ENCODE measurements at regions of chr15 and their contacts with region 1.

Region 1: GRCh38 chr15:56491110-56491722 is 26.3 kb upstream of the MNS1 start:
- DNase-seq: peak; percentile 82

Region 2: DNA sequence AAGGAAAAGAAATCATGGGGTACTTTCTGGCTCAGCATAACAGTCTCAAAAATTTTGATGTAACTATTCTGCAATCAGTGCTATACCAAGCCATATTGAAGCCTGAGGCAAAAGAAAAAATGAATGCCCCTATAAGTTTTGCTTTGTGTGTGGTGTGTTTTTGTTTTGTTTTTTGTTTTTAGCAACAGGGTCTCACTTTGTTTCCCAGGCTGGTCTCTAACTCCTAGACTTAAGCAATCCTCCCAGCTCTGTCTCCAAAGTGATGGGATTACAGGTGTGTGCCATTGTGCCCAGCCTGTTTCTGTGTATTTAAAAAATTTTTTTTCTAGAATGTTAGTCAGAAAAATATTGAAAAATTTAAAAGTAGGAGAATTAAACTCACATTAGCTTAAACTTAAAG is 148.9 kb after region 1 on chr15:
- in situ Hi-C with region 1: no loop called
- DNase-seq: no peak

Region 3: DNA sequence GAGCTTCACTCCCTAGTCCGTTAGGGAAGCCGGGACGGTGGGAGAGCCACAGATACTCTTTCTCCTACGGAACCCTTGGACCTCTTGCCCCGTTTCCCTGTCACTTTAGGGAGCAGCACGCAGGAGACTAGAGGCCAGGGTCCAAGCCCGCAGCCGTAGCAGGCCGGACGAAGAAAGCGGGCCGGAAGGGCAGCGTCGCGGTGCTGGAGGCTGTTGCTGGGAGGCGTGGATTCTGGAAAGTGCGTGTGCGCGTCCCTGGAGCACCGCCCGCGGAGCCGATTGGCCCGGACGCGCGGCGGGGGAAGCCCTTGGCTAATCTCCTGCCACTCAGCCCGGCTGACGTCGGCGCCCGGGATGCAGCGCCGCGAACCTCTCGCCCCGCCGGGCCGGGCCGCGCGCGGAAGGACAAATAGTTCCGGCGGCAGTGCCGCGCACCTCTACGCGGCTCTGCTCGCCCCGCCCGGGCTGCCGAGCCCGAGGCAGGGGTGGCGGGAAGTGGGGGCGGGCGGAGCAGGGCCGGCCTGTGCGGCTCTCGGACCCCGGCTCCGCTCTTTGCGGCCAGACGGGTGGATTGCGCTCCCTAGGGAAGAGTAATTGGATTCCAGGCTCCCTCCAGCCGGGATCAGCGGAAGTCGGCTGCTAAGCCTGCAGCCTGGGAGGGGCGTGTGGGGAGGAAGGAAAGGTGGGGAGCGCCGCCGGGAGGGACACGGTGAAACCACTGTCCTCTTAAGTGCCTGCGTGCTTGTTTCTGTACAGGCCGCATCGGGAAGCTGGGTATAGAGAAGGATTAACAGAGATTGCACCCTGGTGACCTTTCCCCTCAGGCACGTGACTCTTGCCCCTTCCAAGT is 395.9 kb after region 1 on chr15:
- in situ Hi-C with region 1: loop called (anchors 25 kb)
- DNase-seq: peak; percentile 93

Region 4: DNA sequence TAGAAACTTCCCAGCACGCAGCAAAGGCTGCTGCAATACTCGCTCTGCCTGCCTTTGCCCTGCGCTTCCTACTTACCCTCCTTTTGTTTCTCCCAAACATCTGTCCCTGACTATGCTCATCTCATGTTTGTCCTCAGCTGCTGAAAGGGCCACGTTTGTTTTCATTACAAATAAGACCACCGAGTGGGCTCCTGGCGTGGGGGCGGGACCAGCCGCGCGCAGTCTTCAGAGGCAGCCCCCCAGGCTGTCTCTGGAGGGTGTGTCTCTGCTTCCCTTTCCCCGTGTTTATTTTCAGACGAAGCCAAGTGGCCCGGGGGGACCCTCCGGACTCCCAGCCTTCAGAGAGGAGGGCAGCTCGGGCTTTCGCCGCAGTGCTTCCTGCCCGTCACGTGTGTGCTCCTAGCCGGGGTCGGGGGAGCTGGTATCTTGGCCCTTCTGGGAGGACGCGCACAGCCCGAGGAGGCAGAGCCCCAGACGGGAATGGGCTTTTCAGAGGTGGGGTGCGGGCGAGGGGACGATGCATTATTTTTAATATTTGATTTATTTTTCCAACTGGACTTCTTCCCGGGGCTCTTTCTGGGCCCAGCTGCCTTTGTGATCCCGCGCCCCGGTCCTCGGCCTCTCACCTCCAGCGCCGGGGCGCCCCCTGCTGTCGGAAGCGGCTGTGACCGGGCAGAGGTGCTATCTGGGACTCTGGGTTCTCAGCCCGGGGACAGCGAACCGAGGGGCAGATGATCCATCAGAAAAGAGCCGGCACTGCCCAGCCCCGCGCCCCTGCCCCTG is 815.1 kb after region 1 on chr15:
- in situ Hi-C with region 1: loop called (anchors 25 kb)
- DNase-seq: peak; percentile 87

Region 5: GRCh38 chr15:57932348-57932747 is 1441.1 kb after region 1 on chr15:
- in situ Hi-C with region 1: no loop called
- DNase-seq: no peak